ENCODE measurements at regions of chr5 and their contacts with region 1.

Region 1: DNA sequence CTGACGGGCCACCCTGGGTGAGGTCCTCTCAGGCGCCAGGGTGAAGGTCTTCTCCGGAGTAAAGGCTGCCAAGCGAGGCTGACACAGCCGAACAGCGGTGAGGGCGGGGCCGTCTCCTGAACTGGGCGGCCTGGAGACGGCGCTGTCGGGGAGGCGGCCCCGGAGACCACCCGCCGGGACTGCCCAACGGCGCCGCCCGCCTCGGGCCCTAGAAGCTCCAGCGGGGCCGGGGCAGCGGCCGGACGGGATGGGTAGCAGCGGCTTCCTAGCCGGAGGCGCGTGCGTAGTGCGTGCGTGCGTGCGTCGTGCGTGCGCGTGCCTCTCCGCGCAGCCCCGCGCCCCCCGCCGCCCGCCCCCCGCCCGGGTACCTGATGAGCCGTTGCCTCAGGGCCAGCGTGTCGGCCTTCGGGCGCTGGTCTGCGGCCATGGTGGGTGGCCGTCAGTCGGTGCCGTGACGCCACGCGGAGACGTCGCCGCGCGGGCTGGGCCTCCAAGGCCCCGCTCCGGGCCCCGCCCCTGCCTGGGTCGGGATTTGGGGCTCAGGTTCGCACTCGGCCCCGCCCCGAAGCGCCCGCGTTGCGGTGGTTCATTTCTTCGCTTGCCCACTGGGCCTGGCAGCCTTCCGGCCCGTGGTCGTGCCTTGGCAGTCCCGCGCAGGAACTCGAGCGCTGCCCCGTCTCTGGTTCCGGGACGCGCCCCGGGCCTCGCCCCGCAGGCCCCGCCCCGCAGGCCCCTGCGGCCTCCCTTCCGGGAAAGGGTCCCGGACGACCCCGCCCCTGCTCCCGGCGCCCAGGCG is at the start of gene PHYKPL:
- DNase-seq: peak; percentile 33 to 83 (median 65)
- ATAC-seq: peak; percentile 65
- H3K4me3 ChIP-seq: peak within 1 kb of the TSS; percentile 87 to 89
- H3K4me3 Mint-ChIP-seq: peak within 1 kb of the TSS; percentile 81
- H3K27ac ChIP-seq: peak within 1 kb of the TSS; percentile 76 to 78
- H3K27ac Mint-ChIP-seq: peak within 1 kb of the TSS; percentile 87
- H3K4me1 ChIP-seq: peaks cover 61% of the 10 kb centered on the region
- H3K4me1 Mint-ChIP-seq: peaks cover 76% of the 10 kb centered on the region
- H3K27me3 ChIP-seq: no peaks in the 10 kb centered on the region
- H3K27me3 Mint-ChIP-seq: no peaks in the 10 kb centered on the region
- CTCF ChIP-seq: no peak
- total RNA-seq, gene PHYKPL: 82.8 to 90.3 TPM

Region 2: DNA sequence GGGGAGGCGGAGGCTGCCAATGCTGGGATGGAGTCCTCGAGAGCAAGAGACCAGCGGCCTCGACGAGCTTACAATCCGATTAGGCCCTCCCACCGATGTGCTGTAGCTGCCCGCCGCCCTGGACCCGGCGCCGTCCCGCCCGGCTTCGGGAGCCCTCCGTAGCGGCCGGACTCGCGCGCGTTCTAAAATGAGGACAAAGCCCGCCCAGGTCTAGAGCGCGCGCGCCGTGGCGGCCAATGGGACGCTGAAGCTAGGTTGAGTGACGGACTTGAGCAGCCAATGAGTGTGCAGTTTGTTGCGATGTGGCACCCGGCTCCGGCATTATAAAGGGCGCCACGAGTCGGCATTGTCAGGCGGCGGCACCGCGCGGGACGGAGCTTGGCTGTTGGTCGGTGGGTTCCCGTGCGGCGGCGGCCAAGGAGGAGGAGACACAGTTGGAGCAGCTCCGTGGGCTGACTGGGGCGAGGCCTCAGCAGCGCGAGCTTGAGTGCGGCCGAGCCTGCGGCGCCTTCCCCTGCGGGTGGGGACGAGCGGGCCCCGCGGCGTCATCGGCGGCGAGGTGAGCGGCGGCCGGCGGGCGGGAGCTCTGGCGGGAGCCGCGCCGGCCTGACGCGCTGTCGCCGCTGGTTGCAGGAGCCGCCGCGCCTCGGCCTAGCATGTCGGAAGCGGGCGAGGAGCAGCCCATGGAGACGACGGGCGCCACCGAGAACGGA is 28.0 kb before region 1 on chr5 and contains the start of gene HNRNPAB:
- CTCF ChIA-PET with region 1: interaction called, 8 read pairs
- POLR2A ChIA-PET with region 1: interaction called, 7 read pairs
- intact Hi-C with region 1: loop called (anchors 1 kb)
- DNase-seq: peak; percentile 92 to 99 (median 96)
- ATAC-seq: peak; percentile 75
- H3K4me3 ChIP-seq: peak within 1 kb of the TSS; percentile 65 to 73
- H3K4me3 Mint-ChIP-seq: peak within 1 kb of the TSS; percentile 98
- H3K27ac ChIP-seq: peak within 1 kb of the TSS; percentile 60 to 80
- H3K27ac Mint-ChIP-seq: peak within 1 kb of the TSS; percentile 98
- H3K4me1 ChIP-seq: peaks cover 28% of the 10 kb centered on the region
- H3K4me1 Mint-ChIP-seq: peaks cover 41% of the 10 kb centered on the region
- H3K27me3 ChIP-seq: no peaks in the 10 kb centered on the region
- H3K27me3 Mint-ChIP-seq: no peaks in the 10 kb centered on the region
- CTCF ChIP-seq: no peak
- total RNA-seq, gene HNRNPAB: 67.3 to 76.2 TPM

Region 3: GRCh38 chr5:178279725-178280438 is 47.6 kb after region 1 on chr5:
- CTCF ChIA-PET with region 1: interaction called, 7 read pairs
- POLR2A ChIA-PET with region 1: no interaction called
- intact Hi-C with region 1: loop called in 1 of 2 experiments (anchors 2 kb)
- DNase-seq: peak; percentile 31 to 78 (median 61)
- ATAC-seq: no peak
- H3K4me3 ChIP-seq: no peak overlapping the region
- H3K4me3 Mint-ChIP-seq: no peak overlapping the region
- H3K27ac ChIP-seq: no peak overlapping the region
- H3K27ac Mint-ChIP-seq: no peak overlapping the region
- H3K4me1 ChIP-seq: no peaks in the 10 kb centered on the region
- H3K4me1 Mint-ChIP-seq: peaks cover 4% of the 10 kb centered on the region
- H3K27me3 ChIP-seq: no peaks in the 10 kb centered on the region
- H3K27me3 Mint-ChIP-seq: no peaks in the 10 kb centered on the region
- CTCF ChIP-seq: peak; percentile 51

Region 4: DNA sequence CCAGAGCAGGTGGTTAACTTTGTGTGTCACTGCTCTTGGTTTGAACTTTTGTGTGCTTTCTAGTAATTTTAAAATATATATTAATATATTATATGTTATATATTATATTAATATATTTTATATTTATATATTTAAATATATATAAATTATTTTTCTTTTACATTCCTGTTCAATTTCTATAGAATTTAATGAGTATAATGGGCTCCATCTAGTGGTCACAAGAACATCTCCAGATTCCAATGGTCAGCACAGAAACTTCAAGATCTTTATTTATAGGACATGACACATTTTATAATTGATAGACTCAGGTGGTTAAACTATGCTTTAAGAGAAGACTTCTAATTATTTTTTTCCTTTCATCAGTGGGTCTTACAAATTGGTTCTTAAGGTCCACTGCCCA is 318.7 kb after region 1 on chr5:
- CTCF ChIA-PET with region 1: interaction called, 19 read pairs
- POLR2A ChIA-PET with region 1: no interaction called
- intact Hi-C with region 1: loop called (anchors 1 to 2 kb)
- DNase-seq: peak in 1 of 9 experiments; percentile 19
- ATAC-seq: no peak
- H3K4me3 ChIP-seq: no peak overlapping the region
- H3K4me3 Mint-ChIP-seq: no peak overlapping the region
- H3K27ac ChIP-seq: no peak overlapping the region
- H3K27ac Mint-ChIP-seq: no peak overlapping the region
- H3K4me1 ChIP-seq: no peaks in the 10 kb centered on the region
- H3K4me1 Mint-ChIP-seq: no peaks in the 10 kb centered on the region
- H3K27me3 ChIP-seq: no peaks in the 10 kb centered on the region
- H3K27me3 Mint-ChIP-seq: peaks cover 10% of the 10 kb centered on the region
- CTCF ChIP-seq: peak; percentile 29

Region 5: DNA sequence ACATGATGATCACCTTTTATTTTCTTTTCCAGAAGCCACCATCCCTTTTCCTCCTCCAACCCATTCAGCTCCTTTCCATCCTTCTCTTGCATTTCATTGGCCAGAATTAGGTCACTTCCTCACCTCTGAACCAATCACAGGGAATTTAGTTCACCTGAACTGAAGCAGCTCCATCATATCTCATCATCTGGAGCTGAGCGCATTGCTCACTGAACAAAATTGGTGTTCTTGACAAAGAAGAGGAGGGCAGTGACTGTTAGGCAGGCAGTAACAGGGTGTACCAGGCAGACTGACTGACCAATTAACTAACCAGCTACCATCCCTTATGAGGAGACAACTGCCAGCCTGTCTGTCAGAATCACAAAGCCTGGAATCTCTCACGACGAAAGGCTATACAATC is 500.0 kb after region 1 on chr5:
- CTCF ChIA-PET with region 1: no interaction called
- POLR2A ChIA-PET with region 1: no interaction called
- intact Hi-C with region 1: loop called in 1 of 2 experiments (anchors 5 kb)
- DNase-seq: no peak
- ATAC-seq: no peak
- H3K4me3 ChIP-seq: no peak overlapping the region
- H3K4me3 Mint-ChIP-seq: peak overlapping the region; percentile 8
- H3K27ac ChIP-seq: no peak overlapping the region
- H3K27ac Mint-ChIP-seq: no peak overlapping the region
- H3K4me1 ChIP-seq: peaks cover 4% of the 10 kb centered on the region
- H3K4me1 Mint-ChIP-seq: peaks cover 14% of the 10 kb centered on the region
- H3K27me3 ChIP-seq: no peaks in the 10 kb centered on the region
- H3K27me3 Mint-ChIP-seq: no peaks in the 10 kb centered on the region
- CTCF ChIP-seq: no peak

Region 6: GRCh38 chr5:178859625-178860531 is 627.6 kb after region 1 on chr5 and contains the start of gene ZNF354B:
- CTCF ChIA-PET with region 1: no interaction called
- POLR2A ChIA-PET with region 1: no interaction called
- intact Hi-C with region 1: loop called in 1 of 2 experiments (anchors 5 kb)
- DNase-seq: peak; percentile 54 to 93 (median 81)
- ATAC-seq: peak; percentile 96
- H3K4me3 ChIP-seq: peak within 1 kb of the TSS; percentile 60 to 95
- H3K4me3 Mint-ChIP-seq: peak within 1 kb of the TSS; percentile 90
- H3K27ac ChIP-seq: peak within 1 kb of the TSS; percentile 34 to 55
- H3K27ac Mint-ChIP-seq: peak within 1 kb of the TSS; percentile 90
- H3K4me1 ChIP-seq: peaks cover 15% of the 10 kb centered on the region
- H3K4me1 Mint-ChIP-seq: peaks cover 31% of the 10 kb centered on the region
- H3K27me3 ChIP-seq: no peaks in the 10 kb centered on the region
- H3K27me3 Mint-ChIP-seq: no peaks in the 10 kb centered on the region
- CTCF ChIP-seq: no peak
- total RNA-seq, gene ZNF354B: 4.6 to 6.1 TPM

Region 7: GRCh38 chr5:178872302-178872701 is 640.0 kb after region 1 on chr5:
- CTCF ChIA-PET with region 1: no interaction called
- POLR2A ChIA-PET with region 1: no interaction called
- intact Hi-C with region 1: no loop called
- DNase-seq: no peak
- ATAC-seq: no peak
- H3K4me3 ChIP-seq: no peak overlapping the region
- H3K4me3 Mint-ChIP-seq: no peak overlapping the region
- H3K27ac ChIP-seq: no peak overlapping the region
- H3K27ac Mint-ChIP-seq: no peak overlapping the region
- H3K4me1 ChIP-seq: no peaks in the 10 kb centered on the region
- H3K4me1 Mint-ChIP-seq: peaks cover 9% of the 10 kb centered on the region
- H3K27me3 ChIP-seq: no peaks in the 10 kb centered on the region
- H3K27me3 Mint-ChIP-seq: no peaks in the 10 kb centered on the region
- CTCF ChIP-seq: no peak

Region 8: DNA sequence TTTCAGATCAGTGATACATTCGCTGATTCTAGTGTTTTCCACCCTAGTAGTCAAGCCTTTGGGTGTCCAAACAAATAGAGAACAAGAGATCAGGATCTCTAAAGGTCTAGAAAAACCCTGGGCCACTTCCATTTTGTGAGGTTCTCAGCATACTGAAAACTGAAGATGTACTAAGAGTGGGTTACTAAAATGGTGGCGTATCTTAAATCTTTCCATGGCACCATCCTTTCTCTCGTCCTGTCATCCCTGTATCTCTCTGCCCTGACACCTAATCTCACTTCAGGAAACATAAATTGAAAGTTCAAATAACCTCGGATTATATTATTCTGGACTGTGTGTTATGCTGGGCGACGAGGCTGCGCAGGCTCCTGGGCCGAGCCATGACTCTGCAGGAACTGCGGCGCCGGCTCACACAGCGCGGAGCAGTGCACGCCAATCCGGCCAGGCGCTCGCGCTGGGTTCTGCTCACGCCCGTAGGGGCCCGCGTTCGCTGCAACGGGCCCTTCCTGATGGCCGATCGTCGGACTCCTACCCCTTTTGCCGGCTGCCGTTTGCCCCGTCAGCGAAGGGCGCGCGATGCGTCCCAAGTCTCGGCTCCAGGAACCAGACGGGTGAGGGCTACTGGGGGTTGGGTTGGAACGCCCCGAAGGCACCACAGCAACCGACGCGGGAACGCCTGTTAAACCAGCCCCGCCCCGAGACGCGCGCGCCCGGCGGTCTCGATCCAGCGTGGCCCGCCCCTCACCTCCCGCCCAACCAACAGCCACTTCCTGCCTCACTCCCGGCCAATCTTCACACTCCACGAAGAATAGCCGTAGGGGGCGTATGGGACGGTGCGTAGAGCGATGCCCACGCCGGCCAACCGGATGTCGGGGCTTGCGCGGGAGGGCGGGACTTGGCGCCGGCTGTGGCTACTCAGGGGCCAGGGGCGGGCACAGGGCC is 1465.9 kb after region 1 on chr5:
- CTCF ChIA-PET with region 1: no interaction called
- POLR2A ChIA-PET with region 1: no interaction called
- intact Hi-C with region 1: loop called in 1 of 2 experiments (anchors 10 kb)
- DNase-seq: peak; percentile 97 to 100 (median 98)
- ATAC-seq: peak; percentile 87
- H3K4me3 ChIP-seq: peak overlapping the region; percentile 84 to 89
- H3K4me3 Mint-ChIP-seq: peak overlapping the region; percentile 99
- H3K27ac ChIP-seq: peak overlapping the region; percentile 92 to 94
- H3K27ac Mint-ChIP-seq: peak overlapping the region; percentile 100
- H3K4me1 ChIP-seq: peaks cover 32% of the 10 kb centered on the region
- H3K4me1 Mint-ChIP-seq: peaks cover 40% of the 10 kb centered on the region
- H3K27me3 ChIP-seq: no peaks in the 10 kb centered on the region
- H3K27me3 Mint-ChIP-seq: no peaks in the 10 kb centered on the region
- CTCF ChIP-seq: no peak